ENCODE measurements at regions of chr12 and their contacts with region 1.

Region 1: GRCh38 chr12:27635349-27635972 is 60.8 kb upstream of the REP15 start:
- DNase-seq: no peak
- ATAC-seq: peak; percentile 41 to 45

Region 2: DNA sequence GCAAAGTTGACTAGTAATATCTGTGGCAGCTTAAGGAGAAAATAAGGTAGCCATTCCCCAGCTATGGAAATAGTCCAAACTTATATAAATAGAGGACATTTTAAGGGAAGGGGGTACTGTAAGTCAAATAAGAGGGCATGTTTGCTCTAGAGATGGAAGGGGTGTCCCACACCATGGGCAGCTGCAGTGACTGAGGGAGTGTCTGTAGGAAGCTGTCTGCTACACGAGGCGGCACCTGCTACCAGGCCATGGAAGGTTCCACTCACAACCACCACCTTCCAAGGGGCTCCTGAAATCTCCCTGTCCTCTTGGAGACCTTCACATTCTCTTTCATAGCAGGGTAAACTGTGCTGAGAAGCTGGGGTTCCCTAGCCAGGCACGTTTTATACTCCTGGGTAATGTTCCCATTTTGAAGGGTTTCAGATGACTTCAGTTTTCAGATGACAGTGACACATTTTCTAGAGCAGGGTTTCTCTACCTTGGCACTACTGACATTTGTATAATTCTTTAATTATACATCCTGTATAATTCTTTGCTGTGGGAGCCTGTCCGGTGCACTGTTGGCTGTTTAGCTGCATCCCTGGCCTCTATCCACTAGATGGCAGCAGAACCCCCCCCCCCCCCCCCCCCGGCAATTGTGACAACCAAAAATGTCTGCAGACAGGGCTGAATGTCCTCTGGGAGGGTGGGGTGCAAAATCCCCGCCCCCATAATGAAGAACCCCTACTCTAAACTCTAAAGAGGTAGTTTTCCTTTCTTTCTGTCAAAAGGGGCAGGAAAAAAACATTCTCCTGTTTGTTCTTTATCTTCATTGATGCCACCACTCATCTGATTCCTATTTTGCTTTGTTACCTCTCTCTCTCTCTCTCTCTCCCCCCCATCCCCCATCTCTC is 200.5 kb before region 1 on chr12:
- intact Hi-C with region 1: loop called in 1 of 2 experiments (anchors 10 kb)
- DNase-seq: no peak
- ATAC-seq: peak in 1 of 2 donors; percentile 14

Region 3: GRCh38 chr12:27523642-27524493 is 111.6 kb before region 1 on chr12 and contains the start of gene PPFIBP1:
- intact Hi-C with region 1: loop called (anchors 5 kb)
- DNase-seq: peak; percentile 97
- ATAC-seq: peak; percentile 98
- total RNA-seq, gene PPFIBP1: 92.7 to 123 TPM